ENCODE measurements at regions of chr3 and their contacts with region 1.

Region 1: DNA sequence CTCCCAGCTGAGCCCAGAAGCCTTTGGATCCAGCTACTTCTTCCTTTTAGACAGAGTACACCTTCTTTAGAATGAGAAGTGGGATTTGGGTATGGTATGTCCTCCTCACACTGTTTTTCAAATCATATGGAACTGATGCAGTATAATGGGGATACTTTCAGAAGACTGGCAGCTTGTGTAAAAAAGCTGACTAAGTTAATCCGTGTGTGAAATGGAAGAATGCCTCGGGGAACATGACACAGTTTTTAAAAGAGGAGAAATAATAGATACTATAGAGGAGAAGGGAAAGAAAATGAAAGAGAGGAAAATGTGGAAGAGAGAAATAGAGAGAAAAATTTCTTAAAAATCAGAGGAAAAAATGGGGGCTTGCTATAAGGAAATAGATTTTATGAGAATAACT is 47.7 kb downstream of the TUSC7 start:
- DNase-seq: no peak
- H3K4me3 ChIP-seq: no peak overlapping the region
- H3K27ac ChIP-seq: no peak overlapping the region
- H3K4me1 ChIP-seq: no peaks in the 10 kb centered on the region
- H3K27me3 ChIP-seq: no peaks in the 10 kb centered on the region
- CTCF ChIP-seq: no peak
- POLR2A ChIP-seq: no peak

Region 2: GRCh38 chr3:116140100-116140689 is 617.1 kb before region 1 on chr3:
- intact Hi-C with region 1: loop called (anchors 5 kb)
- DNase-seq: no peak
- H3K4me3 ChIP-seq: no peak overlapping the region
- H3K27ac ChIP-seq: no peak overlapping the region
- H3K4me1 ChIP-seq: no peaks in the 10 kb centered on the region
- H3K27me3 ChIP-seq: no peaks in the 10 kb centered on the region
- CTCF ChIP-seq: peak; percentile 55 to 90 (median 79)
- POLR2A ChIP-seq: no peak

Region 3: GRCh38 chr3:116432795-116433194 is 324.5 kb before region 1 on chr3:
- intact Hi-C with region 1: no loop called
- DNase-seq: no peak
- H3K4me3 ChIP-seq: no peak overlapping the region
- H3K27ac ChIP-seq: no peak overlapping the region
- H3K4me1 ChIP-seq: no peaks in the 10 kb centered on the region
- H3K27me3 ChIP-seq: no peaks in the 10 kb centered on the region
- CTCF ChIP-seq: no peak
- POLR2A ChIP-seq: no peak

Region 4: GRCh38 chr3:116453666-116454346 is 303.5 kb before region 1 on chr3:
- intact Hi-C with region 1: loop called (anchors 2 kb)
- DNase-seq: no peak
- H3K4me3 ChIP-seq: no peak overlapping the region
- H3K27ac ChIP-seq: no peak overlapping the region
- H3K4me1 ChIP-seq: no peaks in the 10 kb centered on the region
- H3K27me3 ChIP-seq: no peaks in the 10 kb centered on the region
- CTCF ChIP-seq: peak in 2 of 4 experiments; percentile 29 to 33
- POLR2A ChIP-seq: no peak

Measured in prostate gland (tissue), 2 donors.